Breast epithelium (tissue), 4 donors: ENCODE measurements at regions of chr7 and their contacts with region 1.

Region 1: DNA sequence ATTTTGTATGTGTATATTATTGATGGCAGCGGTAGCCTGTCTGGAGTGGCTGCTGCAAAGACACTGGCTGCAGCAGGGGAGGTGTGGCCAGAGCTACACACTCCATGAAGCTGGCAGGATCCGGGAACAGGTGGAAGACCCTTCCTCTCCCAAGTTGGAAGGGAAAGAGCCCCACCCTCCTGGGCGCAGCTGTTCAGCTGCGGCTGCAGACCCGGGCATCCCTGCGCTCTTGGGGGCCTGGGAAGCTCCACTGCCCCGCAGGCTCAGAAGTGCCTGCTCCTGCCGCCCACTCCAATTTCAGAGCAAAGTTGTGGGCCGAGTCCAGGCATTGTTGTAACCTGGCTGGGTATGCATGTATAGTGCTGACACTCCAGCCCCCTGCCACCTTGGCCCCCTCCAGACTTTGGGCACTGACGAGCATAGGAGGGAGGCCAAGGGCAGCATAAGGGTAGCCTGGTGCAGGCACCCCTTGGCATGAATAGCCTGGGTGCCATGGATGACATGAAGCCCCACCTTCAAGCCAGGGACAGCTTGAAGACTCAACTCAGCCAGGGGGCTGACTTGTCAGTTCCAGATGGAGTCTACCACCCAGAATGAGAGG is 90.7 kb upstream of the TMEM168 start:
- DNase-seq: no peak
- H3K4me3 ChIP-seq: no peak overlapping the region
- H3K27ac ChIP-seq: no peak overlapping the region
- H3K4me1 ChIP-seq: no peaks in the 10 kb centered on the region
- H3K27me3 ChIP-seq: no peaks in the 10 kb centered on the region
- CTCF ChIP-seq: no peak
- POLR2A ChIP-seq: no peak

Region 2: DNA sequence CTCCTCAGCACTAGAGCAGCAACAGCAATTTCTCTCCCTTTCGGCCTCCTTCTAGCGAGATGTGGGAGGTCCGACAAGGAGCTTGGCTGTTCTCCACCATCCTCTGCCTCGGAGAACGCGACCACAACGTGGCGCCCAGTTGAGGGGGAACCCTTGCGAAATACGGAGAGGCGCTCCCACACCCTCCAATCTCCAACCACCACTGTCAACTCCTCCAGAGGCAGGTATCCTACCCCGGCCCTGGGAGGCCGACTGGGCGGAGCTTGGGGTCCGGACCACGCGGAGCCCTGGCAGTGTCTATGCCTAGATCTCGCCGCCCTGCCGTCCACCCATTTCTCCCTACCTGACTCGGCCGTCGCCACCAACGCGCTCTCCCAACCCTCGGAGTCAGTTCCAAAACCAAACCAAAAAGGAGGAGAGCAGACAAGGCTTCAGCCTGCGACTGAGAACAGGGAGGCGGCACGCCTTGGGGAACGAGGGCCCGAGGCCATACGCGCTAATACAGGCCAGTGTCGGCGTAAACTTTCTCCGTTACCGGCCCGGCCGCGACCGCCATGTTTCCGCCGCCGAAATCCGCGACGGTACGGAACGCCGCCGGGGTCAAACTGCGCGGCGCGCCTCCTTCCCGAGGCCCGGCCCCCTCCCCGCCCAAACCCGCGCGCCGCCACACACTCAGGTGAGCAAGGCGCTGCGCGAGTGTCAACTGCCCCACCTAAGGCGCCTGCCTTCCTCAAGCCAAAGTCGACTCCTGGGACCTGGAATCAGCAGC is 90.9 kb before region 1 on chr7 and contains the start of gene TMEM168:
- intact Hi-C with region 1: no loop called
- DNase-seq: peak; percentile 62 to 81
- H3K4me3 ChIP-seq: peak within 1 kb of the TSS; percentile 80 to 86 (median 82)
- H3K27ac ChIP-seq: peak within 1 kb of the TSS; percentile 93 to 96
- H3K4me1 ChIP-seq: peaks cover 0 to 12% of the 10 kb centered on the region in 2 donors
- H3K27me3 ChIP-seq: no peaks in the 10 kb centered on the region
- CTCF ChIP-seq: no peak
- POLR2A ChIP-seq: no peak
- total RNA-seq, gene TMEM168: 23.4 to 36.7 (median 28.2) TPM

Region 3: DNA sequence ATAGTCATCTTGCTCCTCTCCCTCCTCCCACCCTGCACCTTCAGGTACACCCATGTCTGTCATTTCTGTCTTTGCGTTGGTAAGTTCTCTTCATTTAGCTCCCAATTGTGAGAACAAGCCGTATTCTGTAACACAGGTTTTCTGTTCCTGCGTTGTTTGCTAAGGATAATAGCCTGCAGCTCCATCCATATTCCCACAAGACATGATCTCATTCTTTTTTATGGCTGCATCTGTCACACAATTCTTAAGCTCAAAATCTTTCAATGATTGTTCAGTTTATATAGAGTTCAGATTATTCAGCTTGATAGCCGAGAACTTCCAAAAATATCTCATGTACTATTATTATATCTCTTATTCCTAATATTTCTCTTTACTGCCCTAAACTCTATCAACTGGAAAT is 74.8 kb before region 1 on chr7:
- intact Hi-C with region 1: loop called (anchors 2 kb)
- DNase-seq: no peak
- H3K4me3 ChIP-seq: no peak overlapping the region
- H3K27ac ChIP-seq: no peak overlapping the region
- H3K4me1 ChIP-seq: no peaks in the 10 kb centered on the region
- H3K27me3 ChIP-seq: no peaks in the 10 kb centered on the region
- CTCF ChIP-seq: no peak
- POLR2A ChIP-seq: no peak